CD14-positive monocyte (primary cell): ENCODE measurements at regions of chr5 and their contacts with region 1.

Region 1: DNA sequence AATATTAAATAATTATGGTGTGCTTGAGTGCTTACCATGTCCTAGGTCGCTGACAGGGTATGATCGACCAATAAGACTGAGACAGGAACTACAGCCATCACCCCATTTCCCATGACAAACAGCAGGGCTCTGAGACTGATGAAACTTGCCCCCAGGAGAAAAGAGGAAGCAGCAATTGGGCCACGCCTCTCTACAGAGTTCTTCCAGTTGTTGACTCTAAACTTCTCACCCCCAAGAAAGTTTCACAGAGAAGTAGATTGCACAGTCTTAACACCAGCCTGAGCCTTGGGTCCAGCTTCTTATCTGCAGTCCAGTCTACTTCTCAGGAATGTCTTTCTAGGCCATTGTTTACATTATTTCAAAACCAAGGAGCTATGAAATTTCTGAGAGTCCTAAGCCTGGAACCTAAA is 182.2 kb upstream of the ANKRD55 start:
- DNase-seq: peak; percentile 92 to 98 (median 96)
- H3K4me3 ChIP-seq: peak overlapping the region in 1 of 3 experiments; percentile 56
- H3K4me3 Mint-ChIP-seq: peak overlapping the region in 1 of 2 donors; percentile 73
- H3K27ac ChIP-seq: peak overlapping the region; percentile 95
- H3K27ac Mint-ChIP-seq: peak overlapping the region; percentile 98 to 100 (median 99)
- H3K4me1 ChIP-seq: peaks cover 68 to 80% of the 10 kb centered on the region in 2 donors
- H3K4me1 Mint-ChIP-seq: peaks cover 68% of the 10 kb centered on the region
- H3K27me3 ChIP-seq: no peaks in the 10 kb centered on the region
- H3K27me3 Mint-ChIP-seq: peaks cover 0 to 1% (median 0%) of the 10 kb centered on the region in 3 donors
- CTCF ChIP-seq: no peak

Region 2: DNA sequence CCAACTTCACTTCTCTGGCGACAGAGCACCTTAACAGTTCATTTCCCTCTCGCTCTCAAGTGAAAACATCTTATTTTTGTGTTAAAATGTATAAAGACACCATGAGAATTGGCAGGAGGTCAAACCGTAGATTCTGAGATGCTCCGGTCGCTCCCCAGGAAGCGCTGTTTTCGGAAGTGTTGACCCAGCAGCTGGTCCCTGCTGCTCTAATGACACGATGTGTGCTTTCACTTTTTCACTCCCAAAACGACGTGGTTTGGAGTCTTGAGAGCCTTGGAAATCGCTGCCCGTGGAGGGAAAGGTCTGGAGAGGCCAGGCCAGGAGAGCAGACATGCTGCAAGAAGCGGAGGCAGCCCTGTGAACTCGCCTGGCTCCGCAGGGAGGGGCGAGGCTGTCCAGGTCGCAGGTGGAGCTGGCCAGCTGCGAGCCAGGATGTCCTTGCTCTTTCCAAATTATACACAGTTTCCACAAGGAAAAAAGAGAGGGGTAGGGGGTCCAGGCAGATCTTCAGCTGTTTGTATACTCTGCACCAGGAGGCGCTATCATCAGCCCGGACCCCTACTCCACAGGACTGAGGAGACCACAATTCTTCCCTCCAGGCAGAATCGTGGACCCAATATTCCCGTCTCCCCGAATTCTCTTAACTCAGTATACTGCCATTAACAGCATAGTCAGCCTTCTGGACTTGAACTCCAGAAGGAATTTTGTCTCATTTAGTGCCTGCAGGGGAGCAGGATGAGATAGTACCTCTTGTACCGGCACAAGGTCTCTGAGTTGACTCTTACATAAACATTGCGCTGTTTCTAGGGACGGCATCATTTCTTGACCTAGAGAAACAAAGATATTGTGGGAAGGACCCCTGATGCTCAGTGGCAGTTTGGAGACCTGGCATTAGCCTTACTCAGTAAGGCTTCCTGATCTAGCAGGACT is 66.3 kb after region 1 on chr5:
- intact Hi-C with region 1: loop called in 1 of 2 experiments (anchors 5 kb)
- DNase-seq: peak; percentile 38 to 47 (median 42)
- H3K4me3 ChIP-seq: peak overlapping the region; percentile 39 to 82 (median 65)
- H3K4me3 Mint-ChIP-seq: peak overlapping the region; percentile 90 to 96
- H3K27ac ChIP-seq: peak overlapping the region; percentile 75 to 92
- H3K27ac Mint-ChIP-seq: peak overlapping the region; percentile 91 to 97 (median 95)
- H3K4me1 ChIP-seq: peaks cover 38 to 48% of the 10 kb centered on the region in 2 donors
- H3K4me1 Mint-ChIP-seq: peaks cover 49% of the 10 kb centered on the region
- H3K27me3 ChIP-seq: no peaks in the 10 kb centered on the region
- H3K27me3 Mint-ChIP-seq: peaks cover 0 to 6% (median 0%) of the 10 kb centered on the region in 3 donors
- CTCF ChIP-seq: peak; percentile 32

Region 3: DNA sequence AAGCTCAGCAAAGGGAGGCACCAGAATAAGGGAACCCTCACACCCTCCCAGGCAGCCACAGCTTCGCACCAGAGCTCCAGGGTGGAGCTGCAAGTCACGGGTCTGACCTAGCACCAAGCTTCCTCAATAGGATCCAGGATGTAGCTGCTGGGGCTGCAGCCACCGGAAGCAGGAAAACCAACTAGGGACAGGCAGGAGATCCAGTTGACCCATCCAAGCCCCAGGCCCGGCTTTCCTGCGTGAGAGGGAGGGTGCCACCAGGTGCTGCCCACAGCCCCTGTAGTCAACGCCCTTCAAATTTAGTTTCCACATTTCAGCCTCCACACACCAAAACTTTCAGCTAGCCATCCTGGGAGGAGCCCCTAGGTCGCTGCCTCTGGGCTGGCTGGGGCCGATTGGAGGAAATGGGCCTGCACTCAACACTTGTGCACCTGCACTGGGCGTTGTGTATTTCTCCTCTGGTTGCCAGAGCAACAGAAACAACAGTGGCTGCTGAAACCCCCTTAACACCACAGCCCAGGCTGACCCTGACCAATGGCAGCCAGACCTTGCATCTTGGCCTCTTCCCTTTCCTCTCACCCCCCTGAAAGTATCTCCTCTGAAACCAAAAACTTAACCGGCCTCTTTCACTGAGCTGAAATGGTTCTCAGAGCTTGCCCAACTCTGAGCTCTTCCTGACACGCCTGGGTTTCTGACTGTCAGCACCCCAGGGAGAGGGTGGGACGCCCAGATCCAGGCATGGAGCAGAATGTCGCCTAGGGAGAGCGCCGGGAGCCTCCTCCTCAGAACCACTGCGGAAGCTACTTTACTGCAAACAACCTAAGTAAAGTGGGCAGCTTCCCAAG is 173.5 kb after region 1 on chr5:
- intact Hi-C with region 1: loop called in 1 of 2 experiments (anchors 10 kb)
- DNase-seq: peak; percentile 50 to 67 (median 58)
- H3K4me3 ChIP-seq: peak overlapping the region in 1 of 3 experiments; percentile 28
- H3K4me3 Mint-ChIP-seq: peak overlapping the region; percentile 59 to 72
- H3K27ac ChIP-seq: peak overlapping the region; percentile 77 to 79
- H3K27ac Mint-ChIP-seq: peak overlapping the region; percentile 88 to 93 (median 90)
- H3K4me1 ChIP-seq: peaks cover 43 to 56% of the 10 kb centered on the region in 2 donors
- H3K4me1 Mint-ChIP-seq: peaks cover 58% of the 10 kb centered on the region
- H3K27me3 ChIP-seq: no peaks in the 10 kb centered on the region
- H3K27me3 Mint-ChIP-seq: peaks cover 0 to 5% (median 2%) of the 10 kb centered on the region in 3 donors
- CTCF ChIP-seq: no peak

Region 4: DNA sequence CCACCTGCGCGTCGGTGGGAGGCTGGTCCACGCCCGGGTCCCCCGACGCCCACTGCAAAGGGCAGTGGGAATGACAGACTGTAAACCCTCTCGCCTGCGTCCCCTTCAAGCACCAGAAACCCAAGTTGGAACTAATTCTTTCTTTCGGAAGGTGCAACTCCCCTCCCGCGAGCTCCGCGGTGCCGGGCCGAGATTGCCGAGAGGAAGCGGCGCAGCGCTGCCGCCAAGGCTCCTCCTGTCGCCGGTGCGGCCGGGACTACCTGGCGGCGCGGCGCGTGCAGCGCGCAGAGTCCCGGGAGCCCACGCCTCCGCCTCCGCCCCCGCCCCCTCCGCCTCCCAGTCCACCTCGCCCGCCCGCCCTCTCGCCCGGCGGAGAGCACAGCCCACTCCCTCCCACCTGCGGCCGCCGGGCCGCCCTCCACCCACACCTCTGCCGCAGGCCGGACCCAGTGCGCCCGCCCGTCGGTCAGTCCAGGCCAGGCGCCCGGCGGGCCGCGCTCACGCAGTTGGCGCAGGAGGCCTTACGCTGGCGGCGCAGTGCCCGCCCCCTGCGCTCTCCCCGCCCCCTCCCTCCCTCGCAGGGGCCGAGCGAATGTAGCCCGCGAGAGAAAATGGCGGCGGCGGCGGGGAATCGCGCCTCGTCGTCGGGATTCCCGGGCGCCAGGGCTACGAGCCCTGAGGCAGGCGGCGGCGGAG is 399.8 kb after region 1 on chr5 and contains the start of gene MAP3K1:
- intact Hi-C with region 1: loop called (anchors 5 to 10 kb)
- DNase-seq: peak; percentile 70 to 76 (median 74)
- H3K4me3 ChIP-seq: peak within 1 kb of the TSS; percentile 67 to 97 (median 87)
- H3K4me3 Mint-ChIP-seq: peak within 1 kb of the TSS; percentile 88 to 97
- H3K27ac ChIP-seq: peak within 1 kb of the TSS; percentile 79 to 89
- H3K27ac Mint-ChIP-seq: peak within 1 kb of the TSS; percentile 91 to 98 (median 94)
- H3K4me1 ChIP-seq: peaks cover 38 to 53% of the 10 kb centered on the region in 2 donors
- H3K4me1 Mint-ChIP-seq: peaks cover 41% of the 10 kb centered on the region
- H3K27me3 ChIP-seq: no peaks in the 10 kb centered on the region
- H3K27me3 Mint-ChIP-seq: no peaks in the 10 kb centered on the region
- CTCF ChIP-seq: peak; percentile 19
- polyA plus RNA-seq, gene MAP3K1: 44.7 to 62.1 (median 45.6) TPM

Region 5: GRCh38 chr5:56838409-56839039 is 423.2 kb after region 1 on chr5:
- intact Hi-C with region 1: loop called in 1 of 2 experiments (anchors 5 kb)
- DNase-seq: peak in 2 of 3 donors; percentile 69
- H3K4me3 ChIP-seq: peak overlapping the region in 1 of 3 experiments; percentile 43
- H3K4me3 Mint-ChIP-seq: peak overlapping the region; percentile 64 to 69
- H3K27ac ChIP-seq: peak overlapping the region in 1 of 2 donors; percentile 77
- H3K27ac Mint-ChIP-seq: peak overlapping the region; percentile 76 to 88 (median 86)
- H3K4me1 ChIP-seq: peaks cover 58 to 73% of the 10 kb centered on the region in 2 donors
- H3K4me1 Mint-ChIP-seq: peaks cover 89% of the 10 kb centered on the region
- H3K27me3 ChIP-seq: no peaks in the 10 kb centered on the region
- H3K27me3 Mint-ChIP-seq: no peaks in the 10 kb centered on the region
- CTCF ChIP-seq: peak; percentile 75

Region 6: GRCh38 chr5:57173185-57174127 is 758.1 kb after region 1 on chr5 and contains the start of gene GPBP1:
- intact Hi-C with region 1: loop called in 1 of 2 experiments (anchors 10 kb)
- DNase-seq: peak; percentile 98 to 99 (median 99)
- H3K4me3 ChIP-seq: peak within 1 kb of the TSS; percentile 69 to 99 (median 93)
- H3K4me3 Mint-ChIP-seq: peak within 1 kb of the TSS; percentile 89 to 96
- H3K27ac ChIP-seq: peak within 1 kb of the TSS; percentile 98 to 100
- H3K27ac Mint-ChIP-seq: peak within 1 kb of the TSS; percentile 99 to 100 (median 99)
- H3K4me1 ChIP-seq: peaks cover 45 to 54% of the 10 kb centered on the region in 2 donors
- H3K4me1 Mint-ChIP-seq: peaks cover 38% of the 10 kb centered on the region
- H3K27me3 ChIP-seq: no peaks in the 10 kb centered on the region
- H3K27me3 Mint-ChIP-seq: peaks cover 0 to 2% (median 2%) of the 10 kb centered on the region in 3 donors
- CTCF ChIP-seq: no peak
- polyA plus RNA-seq, gene GPBP1: 23.2 to 43.7 (median 30.9) TPM